H1 (cell line): ENCODE measurements at regions of chr2 and their contacts with region 1.

Region 1: DNA sequence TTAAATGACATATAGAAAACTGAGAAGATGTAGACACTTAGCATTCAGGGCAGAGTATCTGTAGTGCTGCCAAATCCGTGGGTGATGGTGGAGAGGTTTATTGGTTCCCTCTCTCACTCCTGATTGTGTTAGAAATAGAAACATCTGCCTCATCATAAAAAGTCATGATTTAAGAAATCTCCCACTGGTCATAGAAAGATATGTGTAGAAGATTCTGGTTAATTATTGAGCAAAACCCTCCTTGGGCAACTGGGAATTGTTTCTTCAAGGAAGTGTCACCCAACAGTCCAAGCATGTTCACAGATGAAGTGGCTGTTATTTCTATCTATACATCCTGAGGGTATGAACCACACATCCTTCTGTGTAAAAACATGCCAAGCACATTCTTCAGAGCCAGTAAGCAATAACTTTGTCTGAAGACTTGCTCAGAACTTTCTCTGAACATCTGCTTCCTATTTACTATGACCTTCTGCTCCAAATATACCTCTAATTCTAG is 33.6 kb upstream of the CHRNA1 start:
- DNase-seq: no peak
- H3K4me3 ChIP-seq: no peak overlapping the region
- H3K27ac ChIP-seq: 0 out of 2 replicates have a peak overlapping the region, but pooled peaks have one; percentile 4
- H3K4me1 ChIP-seq: peaks cover 6 to 22% (median 13%) of the 10 kb centered on the region in 4 experiments; a peak in 5 of 7 replicates
- H3K27me3 ChIP-seq: peaks cover 0 to 1% (median 0%) of the 10 kb centered on the region in 4 experiments; a peak in 1 of 7 replicates
- CTCF ChIP-seq: no peak
- EP300 ChIP-seq: no peak
- POLR2A ChIP-seq: 0 out of 3 replicates have a peak, but pooled peaks of 1 of the 2 experiments have one; percentile 28
- RAD21 ChIP-seq: no peak

Region 2: GRCh38 chr2:174717273-174717672 is 80.6 kb before region 1 on chr2:
- CTCF ChIA-PET with region 1: no interaction called
- POLR2A ChIA-PET with region 1: no interaction called
- DNase-seq: no peak
- H3K4me3 ChIP-seq: no peak overlapping the region
- H3K27ac ChIP-seq: no peak overlapping the region
- H3K4me1 ChIP-seq: no peaks in the 10 kb centered on the region
- H3K27me3 ChIP-seq: no peaks in the 10 kb centered on the region
- CTCF ChIP-seq: no peak
- EP300 ChIP-seq: no peak
- POLR2A ChIP-seq: no peak
- RAD21 ChIP-seq: no peak

Region 3: DNA sequence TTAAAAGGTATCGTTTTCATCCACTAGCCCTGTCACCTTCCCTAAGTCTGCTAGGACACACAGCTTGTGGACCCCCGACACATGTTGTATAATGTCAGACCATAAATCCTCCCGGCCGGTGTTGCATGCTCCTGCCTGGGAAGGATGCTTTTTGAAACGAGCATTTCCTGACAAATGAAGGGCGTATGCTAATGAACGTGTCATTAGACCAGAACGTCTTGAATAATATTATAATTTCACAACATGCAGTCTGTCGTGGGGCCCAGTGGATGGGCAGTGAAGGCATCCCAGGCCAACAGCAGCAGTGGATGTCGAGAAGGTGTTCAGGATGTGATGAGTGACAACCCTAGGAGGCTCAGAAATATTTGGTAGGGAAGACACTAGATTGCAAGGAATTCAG is 41.1 kb before region 1 on chr2:
- CTCF ChIA-PET with region 1: no interaction called
- POLR2A ChIA-PET with region 1: no interaction called
- DNase-seq: no peak
- H3K4me3 ChIP-seq: no peak overlapping the region
- H3K27ac ChIP-seq: no peak overlapping the region
- H3K4me1 ChIP-seq: no peaks in the 10 kb centered on the region
- H3K27me3 ChIP-seq: no peaks in the 10 kb centered on the region; a peak in 1 of 7 replicates
- CTCF ChIP-seq: no peak
- EP300 ChIP-seq: no peak
- POLR2A ChIP-seq: no peak
- RAD21 ChIP-seq: no peak

Region 4: DNA sequence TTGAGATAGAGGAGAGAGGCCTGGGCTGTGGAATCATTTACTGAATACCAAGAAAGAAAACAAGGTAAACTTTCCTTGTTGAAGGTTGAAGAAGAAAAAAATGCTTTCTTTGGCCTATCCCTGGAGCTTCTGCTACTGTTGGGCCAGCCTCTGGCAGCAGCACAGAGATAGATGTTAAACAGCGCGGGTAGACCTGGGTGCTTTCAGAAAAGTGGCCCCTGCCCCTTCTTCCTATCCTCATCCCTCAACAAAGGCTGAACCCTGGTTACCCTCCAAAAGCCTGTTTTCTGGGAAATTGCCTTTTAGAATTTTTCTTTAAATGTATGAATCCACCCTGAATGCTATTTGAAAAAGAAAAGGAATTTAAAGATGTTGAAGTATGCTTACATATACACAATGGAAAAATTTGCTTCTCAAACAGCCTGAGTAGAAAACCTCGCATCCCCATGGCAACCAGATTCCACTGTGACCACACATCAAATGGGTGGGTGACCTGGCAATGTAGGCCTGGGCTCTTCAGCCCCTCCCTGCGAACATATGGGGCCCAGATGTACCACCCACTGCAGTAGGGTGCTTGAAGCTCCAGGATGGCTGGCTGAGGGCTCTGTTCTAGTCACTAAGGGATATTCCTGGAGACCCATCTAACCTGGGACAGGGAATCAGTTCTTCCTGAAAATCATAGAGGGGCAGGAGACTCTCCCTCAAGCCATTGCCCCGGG is 10.2 kb before region 1 on chr2:
- CTCF ChIA-PET with region 1: interaction called, 9 read pairs
- POLR2A ChIA-PET with region 1: interaction called, 12 read pairs
- DNase-seq: peak; percentile 70 to 91
- H3K4me3 ChIP-seq: peak overlapping the region in 1 of 4 experiments; percentile 18; a peak in 1 of 8 replicates
- H3K27ac ChIP-seq: peak overlapping the region; percentile 83
- H3K4me1 ChIP-seq: peaks cover 6 to 34% (median 12%) of the 10 kb centered on the region in 4 experiments
- H3K27me3 ChIP-seq: no peaks in the 10 kb centered on the region
- CTCF ChIP-seq: no peak
- EP300 ChIP-seq: no peak
- POLR2A ChIP-seq: 0 out of 3 replicates have a peak, but pooled peaks of 1 of the 2 experiments have one; percentile 17
- RAD21 ChIP-seq: no peak

Region 5: DNA sequence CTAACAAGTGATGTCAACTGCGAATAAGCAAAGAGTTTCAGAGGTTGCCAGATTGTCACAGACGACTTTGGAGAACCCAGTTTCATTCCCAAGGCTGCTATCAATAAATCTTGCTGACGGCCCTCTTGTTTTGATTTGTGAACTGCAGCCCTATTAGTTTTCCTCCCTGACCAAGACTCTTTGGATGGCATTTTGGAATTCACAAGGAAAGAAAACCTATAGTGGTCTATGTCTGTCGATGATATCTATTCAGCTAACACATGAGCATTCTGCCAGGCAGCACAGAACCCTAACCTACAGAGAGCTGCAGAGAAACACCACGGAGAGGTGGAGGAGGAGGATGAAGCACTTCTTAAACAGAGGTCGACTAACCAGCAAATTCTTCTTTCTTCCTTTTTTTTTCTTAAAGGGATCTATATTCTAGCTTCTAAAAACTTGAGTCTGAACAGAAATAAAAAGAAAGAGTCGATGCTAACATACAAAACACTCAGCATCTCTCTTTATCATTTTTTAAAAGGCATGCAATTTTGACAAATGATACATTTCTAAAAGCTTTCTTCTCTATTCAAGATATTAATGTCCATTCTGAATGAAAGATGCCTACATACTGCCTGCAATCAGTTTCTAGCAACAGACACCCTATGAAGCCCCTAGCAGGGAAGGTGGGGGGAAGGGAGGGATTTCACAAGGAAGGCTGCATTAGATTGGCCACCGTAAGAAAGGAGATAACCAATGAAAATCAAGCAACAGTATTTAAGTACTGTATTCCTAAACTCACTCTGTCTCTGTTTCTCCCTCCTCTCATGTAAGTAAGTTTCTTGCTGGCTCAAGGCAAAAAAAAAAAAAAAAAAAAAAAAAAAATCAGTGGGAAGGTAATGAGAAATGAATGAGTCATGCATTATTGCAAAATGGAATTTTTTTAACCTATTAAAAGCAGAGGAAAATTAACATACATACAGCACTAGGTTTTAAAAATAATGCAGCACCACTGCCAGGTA is 49.4 kb after region 1 on chr2:
- CTCF ChIA-PET with region 1: no interaction called
- POLR2A ChIA-PET with region 1: no interaction called
- DNase-seq: no peak
- H3K4me3 ChIP-seq: peak overlapping the region in 2 of 4 experiments; percentile 41 to 47; a peak in 4 of 8 replicates
- H3K27ac ChIP-seq: no peak overlapping the region
- H3K4me1 ChIP-seq: peaks cover 2 to 20% (median 12%) of the 10 kb centered on the region in 4 experiments; a peak in 4 of 7 replicates
- H3K27me3 ChIP-seq: no peaks in the 10 kb centered on the region
- CTCF ChIP-seq: no peak
- EP300 ChIP-seq: no peak
- POLR2A ChIP-seq: no peak
- RAD21 ChIP-seq: no peak